Activated T-helper 1 cell treated with anti-CD3 and anti-CD28 coated beads, Interleukin-12 subunit alpha, Interleukin-12 subunit beta, Interleukin-2, Interleukin-4 antibody, amounts not matched to agents 30 ng/mL and 10 ng/mL and 1 ng/mL, durations not matched to agents 14 hours and 24 hours and 36 hours (primary cell): ENCODE measurements at regions of chr5 and their contacts with region 1.

Region 1: DNA sequence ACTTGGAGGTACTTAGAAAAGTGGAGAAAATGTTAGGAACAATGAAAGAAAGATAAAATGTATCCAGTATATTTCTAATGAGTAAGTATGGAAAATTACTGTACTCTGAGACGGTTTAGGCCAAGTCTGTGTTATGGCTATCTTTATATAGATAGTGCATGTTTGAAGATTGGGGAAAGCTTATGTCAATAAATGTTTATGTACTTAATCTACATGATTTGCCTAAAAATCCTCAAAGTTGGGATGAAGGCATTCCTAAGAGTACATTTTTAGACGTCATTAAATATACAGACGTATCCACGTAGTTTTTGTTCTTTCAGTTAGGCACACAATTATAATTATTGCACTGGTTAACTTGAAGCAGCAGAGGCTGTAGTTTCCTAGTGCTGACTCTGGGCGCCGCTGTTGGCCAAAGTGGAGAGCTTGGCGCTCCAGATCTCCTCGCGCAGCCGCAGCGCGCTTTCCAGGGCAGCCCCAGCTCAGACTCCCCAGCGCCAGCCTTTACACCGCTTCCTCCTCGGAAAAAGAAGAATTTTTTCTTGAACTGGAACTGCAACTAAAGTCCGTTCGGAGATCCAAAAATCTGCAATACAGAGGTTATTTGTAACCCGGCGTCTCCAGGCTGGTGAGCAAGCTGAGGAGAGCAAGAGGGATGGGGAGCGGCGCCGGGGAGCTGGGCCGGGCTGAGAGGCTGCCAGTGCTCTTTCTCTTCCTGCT is at the start of gene PCDHGB4:
- DNase-seq: no peak
- H3K4me3 Mint-ChIP-seq: peak within 1 kb of the TSS; percentile 39
- H3K27ac Mint-ChIP-seq: no peak within 1 kb of the TSS
- H3K4me1 Mint-ChIP-seq: no peaks in the 10 kb centered on the region
- H3K27me3 Mint-ChIP-seq: peaks cover 3% of the 10 kb centered on the region
- total RNA-seq, gene PCDHGB4: 0.18 and 0.27 TPM in 2 replicates

Region 2: GRCh38 chr5:141338538-141339306 is 48.7 kb before region 1 on chr5 and contains the start of gene PCDHGA2:
- intact Hi-C with region 1: loop called (anchors 5 kb)
- DNase-seq: no peak
- H3K4me3 Mint-ChIP-seq: peak within 1 kb of the TSS; percentile 64
- H3K27ac Mint-ChIP-seq: peak within 1 kb of the TSS; percentile 15
- H3K4me1 Mint-ChIP-seq: no peaks in the 10 kb centered on the region
- H3K27me3 Mint-ChIP-seq: peaks cover 39% of the 10 kb centered on the region
- total RNA-seq, gene PCDHGA2: 0.08 and 0.17 TPM in 2 replicates

Region 3: DNA sequence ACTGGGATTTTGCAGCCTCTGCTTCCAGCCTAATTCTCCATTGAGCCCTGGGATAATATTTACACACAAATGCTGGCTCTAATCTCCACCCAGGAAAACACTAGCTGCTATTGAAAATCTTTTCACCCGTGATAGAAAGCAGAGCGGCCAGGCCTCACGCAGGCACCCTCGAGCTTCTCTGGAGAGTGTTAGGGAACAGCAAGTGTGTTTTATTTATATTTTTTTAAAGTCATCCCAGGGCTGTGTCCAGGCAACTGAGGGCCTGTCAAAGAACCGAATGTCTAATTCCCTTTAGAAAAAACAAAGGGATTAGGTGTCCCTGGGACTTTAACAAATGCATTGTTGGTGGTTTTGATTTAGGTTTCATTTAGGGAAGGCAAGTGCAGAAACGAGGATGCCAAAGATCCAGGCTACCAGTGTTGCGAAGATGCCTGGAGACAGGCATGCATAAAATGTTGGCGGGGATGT is 988.6 kb after region 1 on chr5:
- intact Hi-C with region 1: no loop called
- DNase-seq: no peak
- H3K4me3 Mint-ChIP-seq: no peak overlapping the region
- H3K27ac Mint-ChIP-seq: no peak overlapping the region
- H3K4me1 Mint-ChIP-seq: peaks cover 7% of the 10 kb centered on the region
- H3K27me3 Mint-ChIP-seq: peaks cover under 1% of the 10 kb centered on the region